Activated CD4-positive, alpha-beta T cell treated with anti-CD3 and anti-CD28 coated beads, Interleukin-2, amount 10 ng/mL, durations not matched to agents 7 days and 5 days (primary cell): ENCODE measurements at regions of chr1 and their contacts with region 1.

Region 1: GRCh38 chr1:31977385-31978131 is 36.1 kb upstream of the KHDRBS1 start:
- DNase-seq: no peak
- H3K4me3 Mint-ChIP-seq: no peak overlapping the region
- H3K27ac Mint-ChIP-seq: peak overlapping the region; percentile 55
- H3K4me1 Mint-ChIP-seq: peaks cover 27% of the 10 kb centered on the region
- H3K27me3 Mint-ChIP-seq: no peaks in the 10 kb centered on the region

Region 2: GRCh38 chr1:31799196-31799894 is 178.2 kb before region 1 on chr1:
- CTCF ChIA-PET with region 1: no interaction called
- POLR2A ChIA-PET with region 1: no interaction called
- DNase-seq: no peak
- H3K4me3 Mint-ChIP-seq: no peak overlapping the region
- H3K27ac Mint-ChIP-seq: peak overlapping the region; percentile 19
- H3K4me1 Mint-ChIP-seq: peaks cover 9% of the 10 kb centered on the region
- H3K27me3 Mint-ChIP-seq: peaks cover 17% of the 10 kb centered on the region

Region 3: GRCh38 chr1:31910933-31911332 is 66.6 kb before region 1 on chr1:
- CTCF ChIA-PET with region 1: interaction called, 4 read pairs
- POLR2A ChIA-PET with region 1: interaction called, 10 read pairs
- DNase-seq: no peak
- H3K4me3 Mint-ChIP-seq: no peak overlapping the region
- H3K27ac Mint-ChIP-seq: peak overlapping the region; percentile 65
- H3K4me1 Mint-ChIP-seq: peaks cover 65% of the 10 kb centered on the region
- H3K27me3 Mint-ChIP-seq: no peaks in the 10 kb centered on the region